Activated CD4-positive, alpha-beta T cell treated with anti-CD3 and anti-CD28 coated beads for 36 hours (primary cell): ENCODE measurements at regions of chr9 and their contacts with region 1.

Region 1: DNA sequence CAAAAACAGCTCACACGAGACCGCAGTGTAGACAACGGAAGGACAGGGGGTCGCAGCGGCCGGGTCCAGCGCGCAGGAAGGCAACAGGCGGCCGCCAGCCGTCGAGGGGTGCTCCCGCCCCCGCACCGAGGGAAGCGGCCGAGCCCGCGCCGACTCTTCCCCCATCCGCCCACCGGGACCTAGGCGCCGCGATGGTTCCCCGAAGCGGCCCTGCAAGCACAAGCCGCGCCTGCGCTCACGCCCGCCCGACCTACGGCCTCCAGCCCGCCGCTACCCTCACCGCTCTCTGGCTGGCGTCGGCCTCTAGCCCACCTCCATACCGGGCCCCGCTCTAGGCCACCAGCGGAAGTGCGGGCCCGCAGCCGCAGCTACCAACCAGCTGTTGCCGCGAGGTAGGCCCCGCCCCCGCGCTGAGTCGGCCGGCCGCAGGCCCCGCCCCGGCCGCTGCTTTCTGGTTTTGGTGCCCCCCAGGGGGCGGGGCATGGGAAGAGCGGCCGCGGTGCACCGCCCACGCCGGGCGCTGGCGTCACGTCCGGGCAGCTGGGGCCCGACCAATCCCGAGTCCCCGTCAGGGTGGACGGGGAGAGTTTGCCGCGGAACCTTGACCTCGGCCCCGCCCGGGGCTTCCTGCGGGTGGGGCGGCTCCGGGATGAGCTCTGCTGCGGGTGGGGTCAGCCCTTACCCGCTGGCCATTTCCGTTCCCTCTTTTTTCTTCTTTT is at the start of gene SETX:
- DNase-seq: peak; percentile 98
- ATAC-seq: peak; percentile 81
- H3K4me3 Mint-ChIP-seq: peak within 1 kb of the TSS; percentile 79
- H3K27ac Mint-ChIP-seq: peak within 1 kb of the TSS; percentile 98
- H3K4me1 Mint-ChIP-seq: peaks cover 36% of the 10 kb centered on the region
- H3K27me3 Mint-ChIP-seq: no peaks in the 10 kb centered on the region
- total RNA-seq, gene SETX: 37.5 to 38.1 TPM

Region 2: GRCh38 chr9:131253891-131254491 is 1100.8 kb before region 1 on chr9:
- CTCF ChIA-PET with region 1: interaction called, 5 read pairs
- POLR2A ChIA-PET with region 1: no interaction called
- intact Hi-C with region 1: loop called in 1 of 2 experiments (anchors 5 kb)
- DNase-seq: no peak
- ATAC-seq: no peak
- H3K4me3 Mint-ChIP-seq: peak overlapping the region; percentile 76
- H3K27ac Mint-ChIP-seq: peak overlapping the region; percentile 92
- H3K4me1 Mint-ChIP-seq: peaks cover 48% of the 10 kb centered on the region
- H3K27me3 Mint-ChIP-seq: no peaks in the 10 kb centered on the region

Region 3: GRCh38 chr9:131668439-131669268 is 686.1 kb before region 1 on chr9:
- CTCF ChIA-PET with region 1: no interaction called
- POLR2A ChIA-PET with region 1: interaction called, 3 read pairs
- intact Hi-C with region 1: loop called in 1 of 2 experiments (anchors 10 kb)
- DNase-seq: peak; percentile 83
- ATAC-seq: peak; percentile 68
- H3K4me3 Mint-ChIP-seq: peak overlapping the region; percentile 54
- H3K27ac Mint-ChIP-seq: peak overlapping the region; percentile 96
- H3K4me1 Mint-ChIP-seq: peaks cover 93% of the 10 kb centered on the region
- H3K27me3 Mint-ChIP-seq: no peaks in the 10 kb centered on the region

Region 4: DNA sequence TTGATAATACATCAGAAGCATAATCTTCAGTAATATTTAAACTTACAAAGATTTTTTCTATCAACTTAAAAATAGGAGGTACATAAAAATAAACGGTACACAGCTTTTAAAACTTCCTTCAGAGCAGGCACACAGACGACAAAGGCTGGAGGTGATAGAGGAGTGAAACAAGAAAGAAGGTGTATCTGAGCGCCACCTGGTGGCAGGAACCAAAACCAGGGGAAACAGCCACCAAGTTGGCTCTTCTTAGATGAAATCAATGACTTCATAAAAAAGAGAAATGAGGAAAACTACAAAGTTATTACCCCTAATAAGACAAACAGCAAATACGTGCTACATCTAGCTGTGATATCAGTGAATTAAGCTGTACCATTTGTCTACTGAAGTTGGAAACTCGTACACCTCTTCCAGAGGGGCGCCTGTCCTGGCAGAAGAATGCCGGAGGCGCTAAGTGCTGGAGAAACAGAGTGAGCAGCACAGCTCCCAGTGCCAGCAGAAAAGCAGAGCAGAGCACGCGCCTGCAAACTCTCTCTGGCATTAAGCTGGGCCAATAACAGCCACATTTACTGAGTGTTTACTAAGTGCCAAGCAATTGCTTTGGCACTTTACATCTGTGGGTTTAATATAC is 86.0 kb before region 1 on chr9:
- CTCF ChIA-PET with region 1: interaction called, 12 read pairs
- POLR2A ChIA-PET with region 1: no interaction called
- intact Hi-C with region 1: no loop called
- DNase-seq: peak; percentile 87
- ATAC-seq: peak; percentile 80
- H3K4me3 Mint-ChIP-seq: no peak overlapping the region
- H3K27ac Mint-ChIP-seq: peak overlapping the region; percentile 67
- H3K4me1 Mint-ChIP-seq: peaks cover 17% of the 10 kb centered on the region
- H3K27me3 Mint-ChIP-seq: no peaks in the 10 kb centered on the region

Region 5: GRCh38 chr9:132584601-132585560 is 230.1 kb after region 1 on chr9:
- CTCF ChIA-PET with region 1: no interaction called
- POLR2A ChIA-PET with region 1: no interaction called
- intact Hi-C with region 1: loop called in 1 of 2 experiments (anchors 2 kb)
- DNase-seq: no peak
- ATAC-seq: no peak
- H3K4me3 Mint-ChIP-seq: no peak overlapping the region
- H3K27ac Mint-ChIP-seq: no peak overlapping the region
- H3K4me1 Mint-ChIP-seq: peaks cover 13% of the 10 kb centered on the region
- H3K27me3 Mint-ChIP-seq: peaks cover 56% of the 10 kb centered on the region

Region 6: GRCh38 chr9:132694157-132694556 is 339.4 kb after region 1 on chr9:
- CTCF ChIA-PET with region 1: no interaction called
- POLR2A ChIA-PET with region 1: no interaction called
- intact Hi-C with region 1: no loop called
- DNase-seq: peak; percentile 18
- ATAC-seq: peak; percentile 87
- H3K4me3 Mint-ChIP-seq: no peak overlapping the region
- H3K27ac Mint-ChIP-seq: no peak overlapping the region
- H3K4me1 Mint-ChIP-seq: no peaks in the 10 kb centered on the region
- H3K27me3 Mint-ChIP-seq: peaks cover 3% of the 10 kb centered on the region

Region 7: GRCh38 chr9:132944302-132945185 is 589.7 kb after region 1 on chr9 and contains the start of gene TSC1:
- CTCF ChIA-PET with region 1: no interaction called
- POLR2A ChIA-PET with region 1: no interaction called
- intact Hi-C with region 1: loop called in 1 of 2 experiments (anchors 1 kb)
- DNase-seq: peak; percentile 99
- ATAC-seq: peak; percentile 91
- H3K4me3 Mint-ChIP-seq: peak within 1 kb of the TSS; percentile 81
- H3K27ac Mint-ChIP-seq: peak within 1 kb of the TSS; percentile 99
- H3K4me1 Mint-ChIP-seq: peaks cover 31% of the 10 kb centered on the region
- H3K27me3 Mint-ChIP-seq: no peaks in the 10 kb centered on the region
- total RNA-seq, gene TSC1: 23.9 to 28.6 TPM

Region 8: GRCh38 chr9:133347985-133348717 is 993.4 kb after region 1 on chr9 and contains the starts of genes MED22 and RPL7A:
- CTCF ChIA-PET with region 1: no interaction called
- POLR2A ChIA-PET with region 1: no interaction called
- intact Hi-C with region 1: loop called in 1 of 2 experiments (anchors 10 kb)
- DNase-seq: peak; percentile 96
- ATAC-seq: peak; percentile 83
- H3K4me3 Mint-ChIP-seq: peak within 1 kb of the TSS; percentile 97
- H3K27ac Mint-ChIP-seq: peak within 1 kb of the TSS; percentile 97
- H3K4me1 Mint-ChIP-seq: peaks cover 36% of the 10 kb centered on the region
- H3K27me3 Mint-ChIP-seq: no peaks in the 10 kb centered on the region
- total RNA-seq, gene MED22: 22.9 to 26.4 TPM
- total RNA-seq, gene RPL7A: 3,179 to 3,246 TPM